ENCODE measurements at regions of chr1 and their contacts with region 1.

Region 1: GRCh38 chr1:210360852-210361477 is 32.3 kb downstream of the HHAT start:
- DNase-seq: peak in 1 of 9 donors; percentile 7
- ATAC-seq: no peak
- H3K4me3 ChIP-seq: no peak overlapping the region
- H3K4me3 Mint-ChIP-seq: no peak overlapping the region
- H3K27ac ChIP-seq: no peak overlapping the region
- H3K27ac Mint-ChIP-seq: peak overlapping the region in 1 of 9 donors; percentile 39
- H3K4me1 ChIP-seq: no peaks in the 10 kb centered on the region
- H3K4me1 Mint-ChIP-seq: peaks cover 0 to 9% (median 0%) of the 10 kb centered on the region in 7 donors
- H3K27me3 ChIP-seq: no peaks in the 10 kb centered on the region
- H3K27me3 Mint-ChIP-seq: peaks cover 0 to 3% (median 0%) of the 10 kb centered on the region in 5 donors

Region 2: DNA sequence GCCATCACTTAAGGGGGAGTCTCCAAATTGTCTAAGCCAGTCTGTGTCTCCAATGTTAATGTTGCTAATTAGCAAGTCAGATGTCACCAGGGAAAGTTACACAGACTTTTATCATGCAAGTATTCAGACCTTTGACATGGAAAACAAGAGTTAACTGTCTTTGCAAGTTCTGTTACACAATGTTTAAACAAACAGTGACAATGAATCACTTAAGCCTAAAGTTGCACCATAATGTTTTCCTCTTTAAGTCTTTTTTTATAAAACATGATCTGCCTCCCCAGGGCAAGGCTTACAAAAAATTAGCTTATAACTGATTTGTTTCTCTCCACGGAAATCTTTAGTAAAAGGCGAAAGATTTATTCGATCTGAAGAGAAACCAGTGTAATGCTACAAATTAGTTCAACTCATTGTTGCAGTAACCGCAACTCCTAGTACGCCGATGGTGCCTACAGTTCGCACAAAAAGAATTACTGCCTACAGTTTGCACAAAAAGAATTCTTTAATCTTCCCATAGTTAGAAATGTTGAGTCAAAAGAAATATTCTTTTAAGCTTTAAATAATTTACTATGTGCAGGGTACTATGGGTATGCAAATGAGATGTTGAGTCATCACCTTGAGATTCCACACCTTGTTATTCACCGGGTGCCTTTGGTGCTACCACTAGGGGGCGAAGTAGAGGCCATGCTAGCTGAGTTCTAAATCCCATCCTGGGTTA is 13.1 kb after region 1 on chr1:
- CTCF ChIA-PET with region 1: no interaction called
- POLR2A ChIA-PET with region 1: no interaction called
- intact Hi-C with region 1: loop called in 1 of 2 experiments (anchors 1 kb)
- DNase-seq: peak in 4 of 9 donors; percentile 7 to 67 (median 10)
- ATAC-seq: peak; percentile 79
- H3K4me3 ChIP-seq: no peak overlapping the region
- H3K4me3 Mint-ChIP-seq: no peak overlapping the region
- H3K27ac ChIP-seq: no peak overlapping the region
- H3K27ac Mint-ChIP-seq: peak overlapping the region in 2 of 9 donors; percentile 36 to 46
- H3K4me1 ChIP-seq: peaks cover 0 to 6% of the 10 kb centered on the region in 2 donors
- H3K4me1 Mint-ChIP-seq: peaks cover 0 to 15% (median 11%) of the 10 kb centered on the region in 7 donors
- H3K27me3 ChIP-seq: no peaks in the 10 kb centered on the region
- H3K27me3 Mint-ChIP-seq: peaks cover 0 to 9% (median 0%) of the 10 kb centered on the region in 5 donors